ENCODE measurements at regions of chr2 and their contacts with region 1.

Region 1: GRCh38 chr2:100142393-100142792 is at the start of gene AFF3:
- DNase-seq: peak; percentile 65
- ATAC-seq: peak; percentile 86
- H3K4me3 Mint-ChIP-seq: peak within 1 kb of the TSS; percentile 99
- H3K27ac Mint-ChIP-seq: peak within 1 kb of the TSS; percentile 99
- H3K4me1 Mint-ChIP-seq: peaks cover 47% of the 10 kb centered on the region
- H3K27me3 Mint-ChIP-seq: no peaks in the 10 kb centered on the region
- CTCF ChIP-seq: no peak
- total RNA-seq, gene AFF3: 228 and 271 TPM in 2 replicates

Region 2: DNA sequence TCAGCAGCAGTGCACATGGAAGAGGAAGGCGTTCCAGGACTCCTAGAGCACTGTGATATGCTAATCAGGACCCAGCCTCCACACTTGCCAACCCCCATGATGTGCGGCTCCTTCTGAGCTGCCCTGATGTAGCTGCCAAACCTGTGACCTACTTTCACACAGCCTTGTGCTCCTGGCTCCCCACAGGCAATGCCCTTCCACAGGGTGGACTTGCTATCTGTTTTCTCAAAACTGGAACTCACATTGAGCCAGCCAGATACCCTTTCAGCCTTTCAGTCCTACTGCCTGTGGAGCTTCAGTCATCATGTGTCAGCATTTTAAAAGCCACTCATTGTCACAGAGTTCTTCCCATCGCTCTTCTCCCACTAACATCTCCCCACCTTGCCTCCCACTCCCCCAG is 181.6 kb before region 1 on chr2:
- CTCF ChIA-PET with region 1: no interaction called
- POLR2A ChIA-PET with region 1: no interaction called
- intact Hi-C with region 1: no loop called
- DNase-seq: no peak
- ATAC-seq: no peak
- H3K4me3 Mint-ChIP-seq: no peak overlapping the region
- H3K27ac Mint-ChIP-seq: peak overlapping the region; percentile 3
- H3K4me1 Mint-ChIP-seq: peaks cover 59% of the 10 kb centered on the region
- H3K27me3 Mint-ChIP-seq: no peaks in the 10 kb centered on the region
- CTCF ChIP-seq: no peak

Region 3: GRCh38 chr2:100113990-100114433 is 28.4 kb before region 1 on chr2:
- CTCF ChIA-PET with region 1: interaction called, 6 read pairs
- POLR2A ChIA-PET with region 1: interaction called, 149 read pairs
- intact Hi-C with region 1: loop called (anchors 1 kb)
- DNase-seq: peak; percentile 26
- ATAC-seq: peak; percentile 72
- H3K4me3 Mint-ChIP-seq: peak overlapping the region; percentile 71
- H3K27ac Mint-ChIP-seq: peak overlapping the region; percentile 88
- H3K4me1 Mint-ChIP-seq: peaks cover 82% of the 10 kb centered on the region
- H3K27me3 Mint-ChIP-seq: no peaks in the 10 kb centered on the region
- CTCF ChIP-seq: no peak

Region 4: DNA sequence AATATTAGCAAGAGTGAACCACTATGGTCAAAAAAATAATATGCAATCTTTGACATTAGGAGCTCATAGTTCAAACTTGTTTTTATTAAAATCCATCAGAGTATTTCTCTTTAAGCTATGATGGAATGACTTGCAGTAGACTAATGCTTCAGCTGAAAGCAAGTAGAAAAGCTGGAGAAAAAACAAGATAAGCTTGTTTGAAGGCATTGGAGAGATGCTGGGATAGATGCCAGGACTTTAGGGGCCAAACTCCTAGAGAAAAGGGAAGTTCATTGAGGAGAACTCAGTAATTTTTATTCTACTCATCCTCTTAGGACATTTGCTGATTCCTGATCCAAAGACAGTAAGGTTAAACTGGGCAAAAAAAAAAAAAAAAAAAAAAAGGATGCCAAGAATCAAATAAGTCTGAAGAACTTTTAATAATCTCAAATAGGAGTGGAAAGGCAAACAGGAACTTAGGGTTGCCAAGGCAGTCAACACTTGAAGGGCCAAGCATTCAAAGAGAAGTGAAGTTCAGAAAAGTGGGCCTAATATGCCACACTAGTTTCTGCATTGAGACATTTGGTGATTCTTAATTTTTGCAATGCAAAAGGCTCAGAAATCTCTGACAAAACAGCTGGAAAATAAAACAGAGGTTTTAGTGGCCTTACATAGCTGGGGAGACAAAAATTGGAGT is 19.7 kb after region 1 on chr2:
- CTCF ChIA-PET with region 1: no interaction called
- POLR2A ChIA-PET with region 1: interaction called, 3 read pairs
- intact Hi-C with region 1: loop called (anchors 2 kb)
- DNase-seq: no peak
- ATAC-seq: no peak
- H3K4me3 Mint-ChIP-seq: no peak overlapping the region
- H3K27ac Mint-ChIP-seq: no peak overlapping the region
- H3K4me1 Mint-ChIP-seq: no peaks in the 10 kb centered on the region
- H3K27me3 Mint-ChIP-seq: no peaks in the 10 kb centered on the region
- CTCF ChIP-seq: no peak

Region 5: DNA sequence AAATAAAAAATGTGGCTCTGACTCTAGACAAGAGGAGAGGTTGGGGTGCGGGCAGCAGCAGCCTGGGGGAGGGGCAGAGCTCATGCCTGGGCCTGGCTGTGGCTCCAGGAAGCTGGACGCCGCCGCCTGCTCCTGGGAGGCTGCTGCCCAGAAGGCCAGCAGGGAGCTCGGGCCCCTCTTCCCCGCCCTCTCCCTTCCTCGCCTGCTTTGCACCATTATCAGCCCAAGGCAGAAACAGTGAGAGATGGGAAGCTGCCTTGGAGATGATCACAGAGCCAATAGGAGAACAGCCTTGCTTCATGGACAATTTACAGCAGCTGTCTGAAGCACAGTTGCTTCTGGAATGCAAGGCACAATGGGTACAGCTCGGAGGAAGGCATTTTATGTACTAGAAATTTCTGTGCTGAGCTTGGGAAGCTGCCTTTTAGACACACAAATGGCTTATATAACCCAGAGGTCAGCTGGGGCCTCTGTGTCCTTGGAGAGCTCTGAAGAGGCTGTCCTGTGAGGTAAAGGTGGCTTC is 55.3 kb after region 1 on chr2:
- CTCF ChIA-PET with region 1: no interaction called
- POLR2A ChIA-PET with region 1: no interaction called
- intact Hi-C with region 1: no loop called
- DNase-seq: no peak
- ATAC-seq: no peak
- H3K4me3 Mint-ChIP-seq: no peak overlapping the region
- H3K27ac Mint-ChIP-seq: no peak overlapping the region
- H3K4me1 Mint-ChIP-seq: peaks cover 3% of the 10 kb centered on the region
- H3K27me3 Mint-ChIP-seq: peaks cover under 1% of the 10 kb centered on the region
- CTCF ChIP-seq: no peak

Region 6: DNA sequence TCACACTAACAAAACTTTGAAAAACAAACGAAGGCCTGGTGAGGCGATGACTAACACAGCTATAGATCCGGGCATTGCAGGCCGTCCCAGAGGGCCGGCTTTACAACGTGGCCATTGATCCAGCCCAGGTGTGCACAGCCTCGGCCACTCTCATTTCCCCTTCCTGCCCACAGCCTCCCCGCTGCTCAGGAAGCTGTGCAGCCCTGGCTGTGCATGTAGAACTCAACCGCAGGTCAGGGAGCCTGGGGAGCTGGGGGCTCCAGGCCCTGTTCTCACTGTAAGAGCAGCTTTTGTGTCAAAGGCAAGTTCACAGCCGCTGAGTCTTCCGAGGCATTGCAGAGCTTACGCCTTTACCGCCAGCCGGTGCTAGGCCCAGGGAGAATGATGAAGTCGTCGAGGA is 92.7 kb after region 1 on chr2:
- CTCF ChIA-PET with region 1: interaction called, 16 read pairs
- POLR2A ChIA-PET with region 1: interaction called, 122 read pairs
- intact Hi-C with region 1: loop called (anchors 1 kb)
- DNase-seq: peak; percentile 67
- ATAC-seq: peak; percentile 93
- H3K4me3 Mint-ChIP-seq: peak overlapping the region; percentile 58
- H3K27ac Mint-ChIP-seq: peak overlapping the region; percentile 86
- H3K4me1 Mint-ChIP-seq: peaks cover 76% of the 10 kb centered on the region
- H3K27me3 Mint-ChIP-seq: no peaks in the 10 kb centered on the region
- CTCF ChIP-seq: no peak

Measured in activated B cell treated with CpG ODN at 0.5 μM for 24 hours (primary cell).